ENCODE measurements at regions of chr3 and their contacts with region 1.

Region 1: DNA sequence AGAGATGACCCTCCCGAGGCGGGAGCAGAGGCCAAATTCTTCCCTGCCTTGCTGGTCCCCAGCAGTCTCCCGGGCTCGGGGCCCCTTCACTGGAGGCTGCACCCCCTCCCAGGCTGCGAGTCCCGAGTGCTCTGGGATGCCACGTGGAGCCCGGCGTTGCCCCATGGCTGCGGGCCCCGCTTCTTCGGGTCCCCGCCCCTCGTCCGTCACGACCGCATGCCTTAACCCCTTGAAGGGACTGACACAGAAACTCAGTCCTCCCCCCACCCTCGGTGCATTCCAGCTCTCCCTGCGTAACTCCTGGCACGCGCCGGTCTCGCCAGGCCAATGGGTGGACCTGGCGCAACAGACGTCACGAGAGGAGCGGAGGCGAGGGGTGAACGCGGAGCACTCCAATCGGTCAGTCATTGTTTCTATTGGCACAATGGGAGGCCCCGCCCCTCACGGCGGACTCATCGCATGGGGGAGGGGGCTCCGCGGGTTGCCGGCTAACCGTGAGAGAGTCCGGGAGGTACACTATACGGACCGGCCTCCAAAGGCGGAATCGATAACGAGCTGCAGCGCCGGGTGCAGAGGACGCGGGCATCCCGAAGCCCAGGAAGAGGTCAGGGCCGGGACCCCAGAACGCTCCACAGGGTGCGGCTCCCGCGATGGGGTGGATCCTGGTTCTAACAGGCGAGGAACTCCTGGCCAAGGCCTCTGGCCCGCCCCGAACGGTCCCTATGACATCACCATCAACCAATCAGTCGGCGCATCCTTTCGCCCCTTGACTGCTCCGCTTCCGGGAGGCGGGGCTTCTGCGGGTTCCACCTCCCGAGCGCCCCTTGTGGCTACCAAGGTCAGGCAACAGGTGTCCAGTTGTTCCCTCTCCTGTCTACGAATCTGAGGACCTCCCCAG is 978 bp upstream of the CELSR3 start:
- DNase-seq: peak; percentile 96
- H3K4me3 ChIP-seq: peak overlapping the region; percentile 49
- H3K27me3 ChIP-seq: no peaks in the 10 kb centered on the region
- CTCF ChIP-seq: peak; percentile 90

Region 2: DNA sequence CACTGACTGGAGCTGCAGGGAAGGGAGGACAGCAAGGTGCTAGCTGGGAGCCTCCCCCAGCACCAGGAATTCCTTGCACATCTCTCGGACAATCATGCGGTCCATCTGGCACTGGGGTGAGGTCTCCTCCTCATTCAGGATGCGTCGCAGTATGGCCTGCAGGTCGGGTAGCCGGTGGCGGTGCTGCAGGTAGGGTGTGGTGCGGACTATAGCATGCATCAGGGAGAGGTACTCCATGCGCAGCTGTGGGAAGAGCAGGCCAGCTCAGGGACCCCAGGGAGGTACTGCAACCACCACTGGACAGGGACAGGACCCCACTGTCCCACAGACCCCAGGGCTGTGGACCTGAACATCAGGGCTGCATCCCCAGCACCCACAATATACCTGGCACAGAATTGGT is 10.8 kb after region 1 on chr3:
- CTCF ChIA-PET with region 1: interaction called, 11 read pairs
- POLR2A ChIA-PET with region 1: no interaction called
- DNase-seq: no peak
- H3K4me3 ChIP-seq: no peak overlapping the region
- H3K27me3 ChIP-seq: no peaks in the 10 kb centered on the region
- CTCF ChIP-seq: no peak

Region 3: DNA sequence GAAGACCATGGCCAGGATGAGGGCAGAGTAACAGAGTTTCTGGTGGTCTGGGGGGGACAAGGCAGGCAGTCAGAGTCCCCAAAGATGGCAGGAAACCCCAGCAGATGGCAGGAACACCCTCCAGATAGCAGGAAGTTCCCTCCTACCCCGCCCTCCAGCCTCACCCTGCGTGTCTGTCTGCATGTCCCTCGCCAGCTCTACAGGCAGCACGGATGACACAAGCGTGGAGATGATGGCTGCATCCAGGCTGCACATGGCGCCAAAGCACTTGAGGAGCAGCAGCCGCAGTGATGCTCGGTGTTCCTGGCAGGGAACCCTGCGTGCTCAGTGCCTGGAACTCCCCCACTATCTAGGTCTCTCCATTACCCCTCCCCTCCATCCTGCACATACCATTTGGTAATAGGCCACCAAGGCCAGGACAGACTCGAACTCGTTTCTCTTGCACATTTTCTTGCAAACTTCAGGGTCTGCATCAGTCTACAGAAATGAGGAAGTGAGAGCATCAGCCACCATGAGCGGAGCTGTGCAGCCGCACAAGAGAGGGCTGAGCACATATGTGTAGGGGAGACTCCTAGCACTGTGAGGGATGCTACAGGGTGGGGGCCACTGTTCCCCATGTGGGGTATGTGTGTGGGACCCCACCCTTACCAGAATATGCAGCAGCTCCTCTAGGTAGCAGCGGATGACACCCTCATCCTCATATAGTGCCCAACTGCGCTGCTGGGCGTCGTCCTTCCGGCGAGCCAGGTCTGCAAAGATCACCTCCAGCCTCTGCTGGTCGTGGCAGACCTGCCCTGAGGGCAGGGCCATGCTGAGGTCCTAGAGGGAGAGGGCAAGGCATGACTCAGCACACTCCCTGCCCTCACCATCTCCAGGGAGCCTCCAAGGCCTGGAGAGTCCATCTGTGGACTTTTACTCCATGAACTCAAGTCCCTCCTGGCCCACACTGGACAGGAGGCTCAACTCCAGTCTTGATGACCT is 16.0 kb after region 1 on chr3:
- CTCF ChIA-PET with region 1: interaction called, 16 read pairs
- POLR2A ChIA-PET with region 1: no interaction called
- DNase-seq: no peak
- H3K4me3 ChIP-seq: no peak overlapping the region
- H3K27me3 ChIP-seq: no peaks in the 10 kb centered on the region
- CTCF ChIP-seq: no peak

Region 4: GRCh38 chr3:48685602-48686511 is 22.2 kb after region 1 on chr3 and contains the start of gene NCKIPSD:
- CTCF ChIA-PET with region 1: interaction called, 16 read pairs
- POLR2A ChIA-PET with region 1: no interaction called
- DNase-seq: no peak
- H3K4me3 ChIP-seq: peak within 1 kb of the TSS; percentile 67
- H3K27me3 ChIP-seq: no peaks in the 10 kb centered on the region
- CTCF ChIP-seq: peak; percentile 72
- polyA plus RNA-seq, gene NCKIPSD: 21.5 and 34.9 TPM in 2 replicates